ENCODE measurements at regions of chr22 and their contacts with region 1.

Region 1: GRCh38 chr22:40361100-40361499 is 9.3 kb upstream of the SGSM3 start:
- DNase-seq: no peak
- H3K4me3 ChIP-seq: no peak overlapping the region
- H3K4me3 Mint-ChIP-seq: no peak overlapping the region
- H3K27ac ChIP-seq: no peak overlapping the region
- H3K27ac Mint-ChIP-seq: peak overlapping the region in 2 of 8 donors; percentile 3 to 17
- H3K4me1 ChIP-seq: no peaks in the 10 kb centered on the region
- H3K4me1 Mint-ChIP-seq: peaks cover 0 to 6% (median 0%) of the 10 kb centered on the region in 3 donors
- H3K27me3 ChIP-seq: no peaks in the 10 kb centered on the region
- H3K27me3 Mint-ChIP-seq: no peaks in the 10 kb centered on the region

Region 2: GRCh38 chr22:39414886-39415285 is 946.2 kb before region 1 on chr22:
- CTCF ChIA-PET with region 1: no interaction called
- POLR2A ChIA-PET with region 1: interaction called, 16 read pairs
- DNase-seq: no peak
- H3K4me3 ChIP-seq: no peak overlapping the region
- H3K4me3 Mint-ChIP-seq: peak overlapping the region in 1 of 7 donors; percentile 19
- H3K27ac ChIP-seq: no peak overlapping the region
- H3K27ac Mint-ChIP-seq: no peak overlapping the region
- H3K4me1 ChIP-seq: peaks cover 62% of the 10 kb centered on the region
- H3K4me1 Mint-ChIP-seq: peaks cover 28 to 43% (median 36%) of the 10 kb centered on the region in 3 donors
- H3K27me3 ChIP-seq: no peaks in the 10 kb centered on the region
- H3K27me3 Mint-ChIP-seq: no peaks in the 10 kb centered on the region

Region 3: DNA sequence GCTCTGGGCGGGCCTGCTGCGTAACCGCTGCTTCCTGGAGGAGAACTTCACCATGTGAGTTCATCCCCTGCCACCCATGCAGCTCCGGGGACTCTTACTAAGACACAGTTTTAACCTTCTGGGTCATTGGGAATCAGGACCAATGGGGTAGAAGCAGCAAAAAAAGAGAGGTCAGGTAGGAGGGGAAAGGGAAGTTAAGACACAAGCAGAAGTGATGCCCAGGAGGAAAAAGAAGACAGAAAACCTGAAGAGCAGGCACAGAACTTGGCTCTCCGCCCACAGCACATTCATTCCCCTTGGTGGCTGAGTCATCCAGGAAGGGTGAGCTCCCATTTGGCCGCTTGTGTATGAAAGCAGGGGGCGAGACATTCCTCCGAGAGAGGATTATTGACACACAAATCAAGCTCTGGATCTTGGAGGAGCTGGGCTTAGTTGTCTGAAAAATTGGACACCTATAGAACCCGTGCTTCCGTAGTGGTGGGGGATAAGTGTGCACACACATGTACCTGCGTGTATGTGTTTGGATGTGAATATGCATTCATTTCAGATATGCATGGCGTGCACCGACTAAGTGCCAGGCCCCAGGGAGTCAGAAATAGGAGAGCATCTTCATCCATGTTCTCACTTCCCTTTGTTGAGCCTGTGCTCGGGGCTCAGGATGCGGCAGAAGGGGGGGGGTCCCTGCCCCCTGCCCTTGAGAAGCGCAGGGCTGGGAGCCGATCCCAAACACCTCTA is 726.3 kb before region 1 on chr22:
- CTCF ChIA-PET with region 1: no interaction called
- POLR2A ChIA-PET with region 1: no interaction called
- DNase-seq: no peak
- H3K4me3 ChIP-seq: no peak overlapping the region
- H3K4me3 Mint-ChIP-seq: no peak overlapping the region
- H3K27ac ChIP-seq: no peak overlapping the region
- H3K27ac Mint-ChIP-seq: peak overlapping the region in 1 of 8 donors; percentile 12
- H3K4me1 ChIP-seq: no peaks in the 10 kb centered on the region
- H3K4me1 Mint-ChIP-seq: peaks cover 0 to 4% (median 4%) of the 10 kb centered on the region in 3 donors
- H3K27me3 ChIP-seq: no peaks in the 10 kb centered on the region
- H3K27me3 Mint-ChIP-seq: peaks cover 2 to 5% of the 10 kb centered on the region in 2 donors

Region 4: GRCh38 chr22:40289991-40290459 is 71.1 kb before region 1 on chr22:
- CTCF ChIA-PET with region 1: no interaction called
- POLR2A ChIA-PET with region 1: interaction called, 10 read pairs
- DNase-seq: peak; percentile 49 to 81 (median 66)
- H3K4me3 ChIP-seq: peak overlapping the region; percentile 46
- H3K4me3 Mint-ChIP-seq: peak overlapping the region; percentile 13 to 87 (median 70)
- H3K27ac ChIP-seq: peak overlapping the region; percentile 60
- H3K27ac Mint-ChIP-seq: peak overlapping the region; percentile 91 to 99 (median 96)
- H3K4me1 ChIP-seq: peaks cover 42% of the 10 kb centered on the region
- H3K4me1 Mint-ChIP-seq: peaks cover 45 to 72% (median 69%) of the 10 kb centered on the region in 3 donors
- H3K27me3 ChIP-seq: no peaks in the 10 kb centered on the region
- H3K27me3 Mint-ChIP-seq: no peaks in the 10 kb centered on the region